ENCODE measurements at regions of chr9 and their contacts with region 1.

Region 1: DNA sequence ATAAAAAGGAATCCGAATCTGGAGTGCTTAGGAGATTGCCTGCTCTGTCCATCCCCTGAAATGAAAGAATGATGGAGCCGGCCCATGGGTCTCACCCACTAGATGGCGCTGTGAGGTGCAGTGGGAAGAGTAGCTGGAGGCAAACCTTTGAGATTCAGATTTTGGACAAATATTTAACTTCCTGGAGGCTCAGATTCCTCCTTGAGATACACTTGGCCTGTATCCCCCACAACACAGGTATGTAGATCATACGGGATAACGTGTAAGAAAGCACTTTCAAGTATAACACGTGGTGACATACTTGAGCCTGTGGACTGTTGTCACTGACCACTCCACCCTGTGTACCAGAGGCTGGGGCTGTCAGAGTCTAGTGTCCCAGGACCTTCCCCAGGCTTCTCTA is 32.3 kb downstream of the TRMO start:
- DNase-seq: peak; percentile 68
- CTCF ChIP-seq: peak; percentile 74

Region 2: DNA sequence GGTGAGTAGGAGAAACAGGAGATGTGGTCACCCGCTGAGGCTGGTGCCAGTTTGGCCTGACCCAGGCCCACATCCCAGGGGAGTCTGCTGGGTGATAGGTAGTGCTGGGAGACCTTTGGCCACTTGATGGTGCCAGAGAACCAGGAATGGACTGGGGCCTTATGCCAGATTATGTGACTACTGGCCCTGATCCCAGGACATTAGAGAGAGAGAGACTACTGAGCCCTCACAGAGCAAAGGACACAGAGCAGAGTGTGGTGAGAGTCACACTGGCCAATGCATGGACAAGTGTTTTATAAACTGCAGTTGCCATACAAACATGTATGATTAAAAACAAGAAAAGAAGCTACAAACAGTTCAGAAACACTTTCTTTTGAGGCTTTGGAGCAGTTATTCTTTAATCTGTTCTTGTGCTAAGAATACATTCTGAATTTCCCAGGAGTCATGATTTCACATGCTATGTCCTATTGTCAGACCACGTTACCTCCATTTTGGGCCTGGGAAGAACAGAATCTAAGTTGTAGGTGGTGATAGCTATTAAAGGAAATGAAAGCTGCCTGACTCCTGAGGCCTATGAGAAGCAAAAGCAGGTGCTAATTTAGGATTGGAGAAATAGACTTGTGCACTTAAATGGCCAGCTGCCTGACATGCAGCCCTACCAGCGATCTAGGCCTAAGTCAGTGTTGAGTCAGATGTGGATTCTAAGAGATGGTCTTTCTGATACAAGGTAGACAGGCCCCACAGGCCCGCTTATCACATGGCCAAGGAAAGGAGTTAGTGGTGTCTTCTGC is 421.2 kb before region 1 on chr9:
- in situ Hi-C with region 1: loop called (anchors 10 kb)
- DNase-seq: peak; percentile 64
- CTCF ChIP-seq: peak; percentile 64

Region 3: DNA sequence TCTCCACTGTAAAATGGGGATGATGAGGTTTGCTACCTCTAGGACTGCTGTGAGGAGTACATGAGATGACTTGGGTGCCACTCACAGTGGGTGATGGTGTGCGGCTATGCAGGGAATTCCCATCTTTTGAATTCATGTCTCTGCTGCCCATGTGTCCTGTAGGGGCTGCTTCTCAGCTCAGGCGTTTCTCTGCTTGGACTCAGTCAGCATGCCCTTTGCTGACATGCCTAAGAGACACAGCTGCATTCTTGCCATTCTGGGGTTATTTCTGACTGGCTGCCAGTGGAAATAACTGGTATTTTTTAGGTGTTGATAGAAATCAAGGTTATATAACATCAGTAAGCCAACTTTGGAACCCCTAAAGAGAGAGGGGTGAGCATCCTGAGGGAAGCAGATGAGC is 168.6 kb before region 1 on chr9:
- in situ Hi-C with region 1: loop called (anchors 5 kb)
- DNase-seq: no peak
- CTCF ChIP-seq: no peak

Region 4: DNA sequence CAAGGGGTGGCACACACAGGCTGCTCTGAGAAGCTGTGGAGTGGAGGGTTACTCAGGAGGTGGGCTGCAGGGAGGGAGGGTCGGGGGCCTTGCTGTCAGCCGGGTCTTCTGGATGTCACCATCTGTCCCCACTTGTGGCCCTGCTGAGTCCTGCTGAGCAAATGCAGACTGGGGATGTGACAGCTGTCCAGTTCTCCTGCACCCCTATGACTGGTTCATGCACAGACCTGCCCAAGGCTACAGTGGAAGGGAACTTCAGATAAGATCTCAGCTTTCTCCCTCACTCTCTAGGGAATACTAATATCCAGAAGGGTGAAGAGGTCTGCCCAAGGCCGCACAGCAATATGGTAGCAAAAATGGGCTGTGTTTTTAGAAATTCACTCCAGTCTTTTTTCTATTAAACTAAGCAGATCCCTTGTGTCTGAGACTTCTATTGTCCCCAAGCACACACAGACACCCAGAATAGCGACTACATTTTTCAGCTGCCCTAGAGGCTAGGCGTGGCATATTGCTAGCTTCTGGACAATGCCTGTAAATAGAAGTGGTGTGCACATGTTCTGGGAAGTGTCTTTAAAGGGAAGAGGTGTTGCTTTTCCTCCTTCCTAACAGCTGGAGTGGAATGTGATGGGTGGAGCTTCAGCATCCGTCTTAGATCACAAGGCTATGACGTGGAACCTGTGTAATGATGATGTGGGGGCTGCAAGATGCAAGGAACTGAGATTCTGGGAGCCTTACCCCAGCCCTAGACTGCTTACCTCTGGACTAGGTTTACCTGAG is 416.5 kb after region 1 on chr9:
- in situ Hi-C with region 1: no loop called
- DNase-seq: no peak
- CTCF ChIP-seq: no peak

Region 5: DNA sequence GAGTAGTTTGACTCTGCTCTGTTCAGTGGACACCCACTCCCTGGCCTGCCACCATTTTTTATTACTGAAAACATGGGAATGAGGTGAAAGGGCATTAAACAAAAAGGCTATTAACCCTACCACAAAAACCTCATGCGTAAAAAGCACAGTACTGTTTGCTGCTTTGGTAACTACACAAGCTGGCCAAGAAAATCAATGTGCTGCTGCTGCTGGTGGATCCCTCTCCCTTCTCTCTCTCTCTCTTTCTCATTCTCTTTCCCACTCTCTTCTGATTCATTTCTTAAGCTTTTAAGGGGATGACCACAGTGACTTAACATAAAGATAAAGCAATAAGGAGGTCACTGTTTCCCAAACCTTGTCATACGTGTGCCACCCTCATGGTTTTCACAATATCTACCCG is 548.6 kb after region 1 on chr9:
- in situ Hi-C with region 1: no loop called
- DNase-seq: no peak
- CTCF ChIP-seq: no peak